ENCODE measurements at regions of chr3 and their contacts with region 1.

Region 1: GRCh38 chr3:184874709-184875644 is 63.0 kb downstream of the VPS8 start:
- DNase-seq: peak in 1 of 2 experiments; percentile 37
- H3K4me3 ChIP-seq: no peak overlapping the region
- H3K27ac ChIP-seq: no peak overlapping the region
- H3K4me1 ChIP-seq: no peaks in the 10 kb centered on the region
- H3K27me3 ChIP-seq: no peaks in the 10 kb centered on the region
- CTCF ChIP-seq: peak; percentile 87

Region 2: GRCh38 chr3:184914628-184915027 is 39.7 kb after region 1 on chr3:
- CTCF ChIA-PET with region 1: no interaction called
- POLR2A ChIA-PET with region 1: no interaction called
- intact Hi-C with region 1: no loop called
- DNase-seq: no peak
- H3K4me3 ChIP-seq: no peak overlapping the region
- H3K27ac ChIP-seq: no peak overlapping the region
- H3K4me1 ChIP-seq: no peaks in the 10 kb centered on the region
- H3K27me3 ChIP-seq: no peaks in the 10 kb centered on the region
- CTCF ChIP-seq: no peak

Region 3: GRCh38 chr3:185049710-185050109 is 174.7 kb after region 1 on chr3:
- CTCF ChIA-PET with region 1: no interaction called
- POLR2A ChIA-PET with region 1: no interaction called
- intact Hi-C with region 1: no loop called
- DNase-seq: no peak
- H3K4me3 ChIP-seq: no peak overlapping the region
- H3K27ac ChIP-seq: no peak overlapping the region
- H3K4me1 ChIP-seq: no peaks in the 10 kb centered on the region
- H3K27me3 ChIP-seq: no peaks in the 10 kb centered on the region
- CTCF ChIP-seq: no peak

Region 4: DNA sequence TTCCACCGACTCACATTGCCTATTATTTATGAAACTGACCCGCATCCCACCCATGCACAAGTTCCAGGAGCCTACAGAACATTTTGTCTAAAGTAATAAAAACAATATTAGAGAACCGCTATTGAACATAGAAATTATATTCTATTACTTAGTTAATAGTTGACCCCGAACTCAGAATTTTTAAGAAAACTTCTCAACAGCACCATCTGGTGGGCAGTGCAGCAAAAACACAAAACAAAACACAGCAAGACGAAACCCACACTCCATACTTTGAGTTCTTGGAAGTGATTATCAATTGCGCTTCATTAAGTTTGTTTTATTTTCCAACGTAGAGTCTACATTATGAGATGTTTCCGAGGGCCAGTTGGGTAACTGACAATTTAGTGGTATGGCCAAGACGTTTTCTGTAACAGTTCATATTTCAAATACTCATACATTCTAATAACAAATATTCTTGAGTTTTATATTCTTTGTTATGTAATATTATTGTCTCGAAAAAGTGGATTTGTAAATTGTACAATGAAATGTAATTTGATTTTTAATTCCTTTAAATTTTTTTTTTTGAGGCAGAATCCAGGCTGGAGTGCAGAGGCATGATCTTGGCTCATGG is 301.9 kb after region 1 on chr3:
- CTCF ChIA-PET with region 1: interaction called, 3 read pairs
- POLR2A ChIA-PET with region 1: no interaction called
- intact Hi-C with region 1: loop called (anchors 1 kb)
- DNase-seq: peak; percentile 35 to 46
- H3K4me3 ChIP-seq: no peak overlapping the region
- H3K27ac ChIP-seq: no peak overlapping the region
- H3K4me1 ChIP-seq: no peaks in the 10 kb centered on the region
- H3K27me3 ChIP-seq: peaks cover 42% of the 10 kb centered on the region
- CTCF ChIP-seq: peak; percentile 94

Region 5: GRCh38 chr3:185210621-185211142 is 335.7 kb after region 1 on chr3:
- CTCF ChIA-PET with region 1: interaction called, 6 read pairs
- POLR2A ChIA-PET with region 1: interaction called, 11 read pairs
- intact Hi-C with region 1: no loop called
- DNase-seq: no peak
- H3K4me3 ChIP-seq: no peak overlapping the region
- H3K27ac ChIP-seq: no peak overlapping the region
- H3K4me1 ChIP-seq: no peaks in the 10 kb centered on the region
- H3K27me3 ChIP-seq: no peaks in the 10 kb centered on the region
- CTCF ChIP-seq: no peak

Region 6: DNA sequence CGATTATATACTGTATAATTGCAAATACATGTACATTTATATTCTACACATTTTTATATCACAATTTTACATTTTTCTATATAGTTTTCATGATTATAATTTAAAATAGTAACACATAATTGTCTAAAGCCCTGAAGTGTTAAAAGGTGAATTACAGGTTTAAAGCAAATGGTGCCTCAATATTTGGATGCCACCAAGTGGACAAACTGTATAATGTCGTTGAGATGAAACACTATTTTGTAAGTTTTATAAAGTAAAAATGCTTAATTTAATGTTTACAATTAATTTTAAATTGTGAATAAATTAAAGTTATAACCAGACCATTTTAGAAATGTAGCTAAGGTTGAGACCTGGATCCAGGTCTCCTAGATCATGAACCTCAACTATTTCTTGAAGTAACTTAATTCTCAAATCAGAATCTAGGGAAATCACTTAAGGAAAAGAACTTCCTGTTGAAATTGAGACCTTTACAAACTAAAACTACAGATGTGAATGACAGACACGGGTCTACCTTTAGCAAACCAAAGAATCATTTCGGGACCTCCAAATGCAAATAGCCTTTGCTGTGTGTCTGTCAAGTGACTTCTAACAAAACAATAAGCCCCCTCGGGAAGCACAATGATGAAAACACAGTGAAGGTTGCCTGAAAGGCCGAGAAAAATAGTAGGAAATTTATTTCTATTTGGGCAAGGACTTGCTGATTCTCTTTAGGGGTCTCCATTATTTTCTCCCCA is 341.1 kb after region 1 on chr3:
- CTCF ChIA-PET with region 1: interaction called, 6 read pairs
- POLR2A ChIA-PET with region 1: no interaction called
- intact Hi-C with region 1: loop called (anchors 1 kb)
- DNase-seq: no peak
- H3K4me3 ChIP-seq: no peak overlapping the region
- H3K27ac ChIP-seq: no peak overlapping the region
- H3K4me1 ChIP-seq: 0 out of 2 replicates have a peak, but pooled peaks cover 4% of the 10 kb centered on the region
- H3K27me3 ChIP-seq: no peaks in the 10 kb centered on the region
- CTCF ChIP-seq: peak; percentile 86

Region 7: DNA sequence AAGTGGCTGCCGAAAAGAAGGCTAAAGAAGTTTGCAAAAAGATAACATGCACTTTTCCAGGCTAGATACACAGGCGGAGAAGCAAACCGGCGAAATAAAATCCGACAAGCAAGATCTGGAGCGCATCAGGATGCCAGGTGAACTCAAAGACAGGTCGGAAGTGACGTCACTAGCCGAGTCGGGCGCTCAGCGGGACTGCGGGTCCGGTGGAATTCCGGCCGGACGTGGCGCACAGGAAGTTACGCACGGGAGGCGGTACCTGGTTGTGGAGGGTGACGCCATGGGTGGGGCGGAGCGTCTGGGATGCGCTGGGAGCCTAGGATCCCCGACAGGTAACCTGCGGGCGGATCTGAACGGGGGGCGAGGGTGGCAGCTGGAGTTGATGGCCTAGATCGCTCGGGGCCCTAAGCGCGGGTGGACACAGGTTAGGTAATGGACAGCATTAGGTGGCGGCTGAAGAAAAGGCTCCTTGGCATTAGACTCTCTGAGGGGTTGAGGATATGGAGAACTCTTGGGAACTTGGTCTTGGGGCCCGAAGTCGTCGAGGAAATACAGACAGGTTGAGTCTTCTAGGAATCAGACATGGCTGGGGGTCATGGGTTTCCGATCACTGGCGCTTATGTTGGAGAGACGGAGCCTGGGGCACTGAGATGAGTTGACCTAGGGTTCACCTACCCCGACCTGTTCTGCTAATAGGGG is 407.9 kb after region 1 on chr3:
- CTCF ChIA-PET with region 1: no interaction called
- POLR2A ChIA-PET with region 1: no interaction called
- intact Hi-C with region 1: loop called (anchors 1 kb)
- DNase-seq: peak; percentile 96 to 98
- H3K4me3 ChIP-seq: peak overlapping the region; percentile 95
- H3K27ac ChIP-seq: peak overlapping the region; percentile 55
- H3K4me1 ChIP-seq: peaks cover 8% of the 10 kb centered on the region
- H3K27me3 ChIP-seq: no peaks in the 10 kb centered on the region
- CTCF ChIP-seq: no peak

Region 8: GRCh38 chr3:185308126-185308754 is 433.3 kb after region 1 on chr3:
- CTCF ChIA-PET with region 1: no interaction called
- POLR2A ChIA-PET with region 1: no interaction called
- intact Hi-C with region 1: loop called (anchors 1 kb)
- DNase-seq: peak; percentile 69 to 74
- H3K4me3 ChIP-seq: no peak overlapping the region
- H3K27ac ChIP-seq: no peak overlapping the region
- H3K4me1 ChIP-seq: no peaks in the 10 kb centered on the region
- H3K27me3 ChIP-seq: no peaks in the 10 kb centered on the region
- CTCF ChIP-seq: peak; percentile 94

Measured in PC-9 (cell line).